ENCODE measurements at regions of chr17 and their contacts with region 1.

Region 1: DNA sequence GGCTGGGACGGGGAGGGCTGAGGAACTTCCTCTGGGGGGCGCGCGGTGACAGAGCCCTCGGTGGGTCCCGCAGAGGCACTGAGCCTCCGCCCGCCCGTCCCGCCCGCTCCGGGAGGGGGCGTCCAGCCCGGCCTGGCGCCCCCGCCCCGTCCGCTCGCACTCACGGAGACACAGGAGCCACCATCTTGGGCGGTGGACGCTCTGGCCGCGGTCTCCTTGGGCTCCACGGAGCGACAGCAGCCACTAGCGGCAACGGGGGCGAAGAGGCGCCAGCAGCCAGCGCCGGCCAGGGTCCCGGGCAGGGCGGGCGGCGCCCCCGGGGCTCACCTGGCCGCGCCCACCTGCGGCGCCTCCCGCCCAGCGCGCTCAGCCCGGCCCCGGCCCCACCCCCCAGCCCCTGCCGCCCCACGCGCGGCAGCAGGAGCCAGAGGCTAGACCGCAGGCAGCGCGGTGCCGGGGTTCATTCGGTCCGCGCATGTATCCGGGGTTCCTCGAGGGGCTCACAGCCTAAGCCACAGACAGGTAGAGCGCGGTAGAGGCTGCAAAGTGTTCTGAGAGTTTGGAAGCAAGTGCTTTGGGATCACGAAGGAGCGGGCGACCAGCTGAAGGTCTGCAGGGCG is at the start of gene C17orf113:
- DNase-seq: peak in 1 of 2 experiments; percentile 76
- H3K4me3 ChIP-seq: peak within 1 kb of the TSS; percentile 40 to 73 (median 62)
- H3K27ac ChIP-seq: no peak within 1 kb of the TSS
- H3K4me1 ChIP-seq: peaks cover 0 to 23% (median 12%) of the 10 kb centered on the region in 4 experiments; a peak in 6 of 7 replicates
- H3K27me3 ChIP-seq: peaks cover 0 to 4% (median 1%) of the 10 kb centered on the region in 4 experiments; a peak in 3 of 7 replicates
- CTCF ChIP-seq: peak; percentile 26 to 68 (median 64)
- EP300 ChIP-seq: no peak
- POLR2A ChIP-seq: no peak
- RAD21 ChIP-seq: peak; percentile 24 to 53
- total RNA-seq, gene C17orf113: 1.4 TPM in 2 replicates

Region 2: DNA sequence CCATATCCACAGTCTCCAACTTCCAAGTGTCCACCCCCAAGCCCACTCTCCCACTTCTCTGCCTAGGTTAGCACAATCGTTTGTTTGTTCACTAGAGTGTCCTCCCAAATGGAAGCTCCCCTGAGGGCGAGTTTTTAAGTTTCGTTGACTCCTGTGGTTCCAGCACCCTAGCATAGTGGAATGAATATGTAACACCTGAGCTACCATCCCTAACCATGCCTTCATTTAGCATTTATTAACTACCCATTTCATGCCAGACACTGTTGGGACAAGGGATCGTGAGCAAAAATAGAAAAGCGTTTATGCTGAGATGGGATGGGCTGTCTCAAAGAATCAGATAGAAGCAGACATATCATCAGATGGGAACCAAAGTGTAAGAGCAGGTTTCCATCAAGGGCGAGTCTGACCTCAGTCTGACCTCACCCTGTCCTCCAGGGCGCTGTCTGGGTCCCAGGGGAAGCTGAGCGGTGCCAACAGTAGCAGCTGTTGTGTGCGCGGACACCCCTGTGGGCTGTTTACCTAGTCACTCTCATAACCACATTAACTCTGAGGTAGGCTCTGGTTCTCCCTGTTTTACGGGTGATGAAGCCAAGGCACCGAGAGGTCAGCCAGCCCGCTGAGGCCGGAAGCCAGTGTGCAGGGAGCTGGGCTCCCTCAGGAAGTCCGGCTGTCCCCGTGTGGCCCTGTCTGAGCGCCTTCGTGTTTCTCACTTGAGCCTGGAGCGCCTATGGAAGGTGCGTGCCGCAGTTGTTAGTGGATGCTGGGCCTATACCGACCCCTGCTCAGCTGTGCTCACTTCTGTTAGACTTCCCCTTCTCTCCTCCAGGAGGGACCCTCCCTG is 77.7 kb before region 1 on chr17:
- CTCF ChIA-PET with region 1: no interaction called
- POLR2A ChIA-PET with region 1: no interaction called
- DNase-seq: no peak
- H3K4me3 ChIP-seq: no peak overlapping the region
- H3K27ac ChIP-seq: no peak overlapping the region
- H3K4me1 ChIP-seq: peaks cover 0 to 1% (median 0%) of the 10 kb centered on the region in 4 experiments; a peak in 5 of 7 replicates
- H3K27me3 ChIP-seq: no peaks in the 10 kb centered on the region
- CTCF ChIP-seq: no peak
- EP300 ChIP-seq: no peak
- POLR2A ChIP-seq: no peak
- RAD21 ChIP-seq: no peak

Region 3: DNA sequence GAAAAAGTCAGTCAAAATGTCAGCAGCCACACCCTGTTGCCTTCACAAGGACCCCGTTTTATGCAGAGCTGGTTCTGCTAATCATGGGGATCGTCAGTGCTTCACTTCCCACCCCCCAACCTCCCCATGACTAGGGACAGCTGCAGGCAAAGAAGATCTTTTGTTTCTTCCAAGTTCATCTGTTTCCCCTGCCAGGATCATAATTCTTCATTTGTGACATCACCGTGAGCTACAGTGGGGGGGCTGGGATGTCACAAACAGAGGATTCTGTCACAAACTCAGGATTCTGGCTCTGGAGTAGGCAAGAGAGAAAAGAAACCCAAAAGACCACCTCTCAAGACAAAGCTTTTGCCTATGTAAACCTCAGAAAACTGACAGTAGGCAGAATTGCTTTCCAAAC is 57.9 kb before region 1 on chr17:
- CTCF ChIA-PET with region 1: no interaction called
- POLR2A ChIA-PET with region 1: no interaction called
- DNase-seq: no peak
- H3K4me3 ChIP-seq: no peak overlapping the region
- H3K27ac ChIP-seq: no peak overlapping the region
- H3K4me1 ChIP-seq: no peaks in the 10 kb centered on the region
- H3K27me3 ChIP-seq: no peaks in the 10 kb centered on the region
- CTCF ChIP-seq: no peak
- EP300 ChIP-seq: no peak
- POLR2A ChIP-seq: no peak
- RAD21 ChIP-seq: no peak

Region 4: GRCh38 chr17:42027961-42028790 is 22.3 kb before region 1 on chr17:
- CTCF ChIA-PET with region 1: interaction called, 191 read pairs
- POLR2A ChIA-PET with region 1: interaction called, 4 read pairs
- DNase-seq: peak in 1 of 2 experiments; percentile 77
- H3K4me3 ChIP-seq: no peak overlapping the region
- H3K27ac ChIP-seq: no peak overlapping the region
- H3K4me1 ChIP-seq: peaks cover 0 to 12% (median 5%) of the 10 kb centered on the region in 4 experiments; a peak in 4 of 7 replicates
- H3K27me3 ChIP-seq: no peaks in the 10 kb centered on the region
- CTCF ChIP-seq: peak; percentile 65 to 91 (median 80)
- EP300 ChIP-seq: no peak
- POLR2A ChIP-seq: no peak
- RAD21 ChIP-seq: peak; percentile 35 to 58

Region 5: GRCh38 chr17:42039794-42040763 is 10.4 kb before region 1 on chr17:
- CTCF ChIA-PET with region 1: interaction called, 14 read pairs
- POLR2A ChIA-PET with region 1: interaction called, 9 read pairs
- DNase-seq: no peak
- H3K4me3 ChIP-seq: no peak overlapping the region
- H3K27ac ChIP-seq: no peak overlapping the region
- H3K4me1 ChIP-seq: peaks cover 0 to 6% (median 2%) of the 10 kb centered on the region in 4 experiments; a peak in 1 of 7 replicates
- H3K27me3 ChIP-seq: no peaks in the 10 kb centered on the region
- CTCF ChIP-seq: no peak
- EP300 ChIP-seq: no peak
- POLR2A ChIP-seq: no peak
- RAD21 ChIP-seq: no peak

Region 6: DNA sequence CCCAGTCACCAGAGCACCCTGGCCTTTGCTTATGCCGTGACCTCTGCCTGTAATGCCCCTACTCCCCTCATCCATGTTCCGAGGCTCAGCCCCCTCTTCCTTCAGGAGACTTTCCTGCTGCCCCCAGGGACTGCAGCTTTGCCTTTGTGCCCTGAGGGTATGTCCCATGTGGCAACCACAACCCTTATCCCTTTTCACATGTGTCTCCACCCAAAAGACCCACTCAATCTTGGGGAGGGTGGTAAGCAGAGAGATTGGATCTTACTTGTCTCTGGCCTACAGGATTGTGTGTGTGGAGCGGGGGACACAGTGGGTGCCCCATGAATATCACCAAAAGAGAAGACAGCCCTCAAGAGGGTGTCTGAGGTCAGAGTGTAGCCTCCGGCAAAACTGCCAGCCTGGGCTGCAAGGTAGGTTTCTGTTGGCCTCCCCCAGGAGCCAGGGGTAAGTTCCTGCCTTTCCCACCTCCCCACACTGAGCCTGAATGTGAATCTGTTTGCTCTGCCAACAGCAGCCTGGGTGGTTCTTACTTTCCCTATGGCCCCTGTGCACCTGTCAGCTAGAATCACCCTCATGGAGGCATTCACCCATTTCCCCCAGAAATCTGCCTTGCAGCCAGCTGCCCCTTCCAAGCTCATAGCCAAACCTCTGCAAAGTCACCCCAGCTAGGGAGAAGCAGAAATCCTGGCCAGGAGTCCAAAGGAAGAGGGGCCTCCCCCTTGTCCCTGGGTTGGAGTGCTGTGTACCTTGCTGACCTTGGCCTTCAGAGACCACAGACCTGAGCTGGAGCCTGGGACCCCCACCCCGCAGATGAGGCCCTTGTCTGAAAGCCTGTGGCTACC is 11.4 kb after region 1 on chr17:
- CTCF ChIA-PET with region 1: interaction called, 114 read pairs
- POLR2A ChIA-PET with region 1: interaction called, 5 read pairs
- DNase-seq: no peak
- H3K4me3 ChIP-seq: no peak overlapping the region
- H3K27ac ChIP-seq: no peak overlapping the region
- H3K4me1 ChIP-seq: peaks cover 0 to 6% (median 3%) of the 10 kb centered on the region in 4 experiments; a peak in 6 of 7 replicates
- H3K27me3 ChIP-seq: no peaks in the 10 kb centered on the region
- CTCF ChIP-seq: no peak
- EP300 ChIP-seq: no peak
- POLR2A ChIP-seq: no peak
- RAD21 ChIP-seq: no peak